ENCODE measurements at regions of chr10 and their contacts with region 1.

Region 1: GRCh38 chr10:47311932-47312662 is 10.2 kb upstream of the GDF2 start:
- DNase-seq: peak; percentile 89
- ATAC-seq: peak; percentile 90
- H3K4me3 Mint-ChIP-seq: peak overlapping the region; percentile 54
- H3K27ac Mint-ChIP-seq: peak overlapping the region; percentile 86
- H3K4me1 Mint-ChIP-seq: peaks cover 18% of the 10 kb centered on the region
- H3K27me3 Mint-ChIP-seq: no peaks in the 10 kb centered on the region

Region 2: DNA sequence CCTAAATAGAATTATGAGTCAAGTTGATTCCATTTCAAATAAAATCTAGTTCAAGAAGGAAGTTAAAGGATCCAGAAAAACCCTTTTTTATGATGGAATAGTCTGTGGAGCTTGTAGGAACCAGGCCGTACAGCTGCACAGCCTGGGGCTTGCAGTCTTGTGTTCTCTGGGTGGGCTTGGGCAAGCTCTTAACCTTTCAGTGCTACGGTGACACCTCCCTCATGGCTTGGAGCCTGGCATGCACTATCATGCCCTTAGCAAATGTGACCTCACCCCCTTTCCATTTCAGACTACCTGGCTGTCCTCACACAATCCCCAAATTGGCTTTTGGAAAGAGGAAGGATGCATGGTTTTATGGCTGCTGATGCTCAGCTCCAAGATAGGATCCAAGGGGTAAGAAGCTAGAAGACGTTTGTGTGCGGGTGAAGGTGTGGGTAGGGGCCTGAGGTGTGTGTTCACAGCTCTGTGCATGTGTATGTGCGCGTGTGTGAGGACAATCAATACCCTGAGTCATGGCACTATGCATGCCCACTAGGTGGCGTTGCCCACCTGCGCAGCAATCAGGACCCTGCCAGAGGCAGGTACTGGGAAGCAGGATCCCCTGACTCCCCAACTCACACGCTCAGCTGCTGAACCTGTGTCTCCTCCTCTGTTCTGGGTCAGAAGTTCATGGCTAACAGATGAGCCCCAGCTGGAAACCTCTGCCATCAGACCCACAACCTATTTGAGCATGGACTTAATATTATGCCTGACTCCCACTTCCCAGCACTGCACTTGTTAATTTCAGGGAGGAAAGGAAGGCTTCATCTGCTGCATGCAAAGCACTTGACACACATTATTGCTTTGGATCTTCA is 287.5 kb before region 1 on chr10:
- CTCF ChIA-PET with region 1: interaction called, 48 read pairs
- POLR2A ChIA-PET with region 1: interaction called, 5 read pairs
- DNase-seq: peak; percentile 76
- ATAC-seq: peak; percentile 86
- H3K4me3 Mint-ChIP-seq: no peak overlapping the region
- H3K27ac Mint-ChIP-seq: no peak overlapping the region
- H3K4me1 Mint-ChIP-seq: no peaks in the 10 kb centered on the region
- H3K27me3 Mint-ChIP-seq: no peaks in the 10 kb centered on the region

Region 3: GRCh38 chr10:47034441-47035051 is 277.6 kb before region 1 on chr10:
- CTCF ChIA-PET with region 1: interaction called, 11 read pairs
- POLR2A ChIA-PET with region 1: no interaction called
- DNase-seq: no peak
- ATAC-seq: no peak
- H3K4me3 Mint-ChIP-seq: no peak overlapping the region
- H3K27ac Mint-ChIP-seq: no peak overlapping the region
- H3K4me1 Mint-ChIP-seq: no peaks in the 10 kb centered on the region
- H3K27me3 Mint-ChIP-seq: no peaks in the 10 kb centered on the region

Region 4: DNA sequence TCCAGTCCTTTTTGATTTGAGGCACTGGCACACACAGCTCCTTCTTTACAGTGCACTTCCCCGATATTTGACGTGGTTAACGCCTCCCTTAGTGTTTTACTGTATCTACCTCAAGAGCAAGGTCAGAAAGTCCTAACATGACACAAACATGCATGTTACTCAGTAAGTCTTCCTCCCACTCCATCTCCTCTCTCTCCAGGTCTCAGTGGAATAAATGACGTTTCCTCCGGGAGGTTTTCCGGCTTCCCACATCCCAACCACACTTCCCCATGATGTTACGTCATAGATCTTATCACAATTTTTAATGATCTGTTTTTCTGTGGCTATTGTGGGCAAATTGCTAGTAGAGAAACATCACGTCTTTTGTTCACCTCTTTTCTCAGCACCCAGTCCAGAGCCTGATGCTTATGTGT is 235.1 kb before region 1 on chr10:
- CTCF ChIA-PET with region 1: interaction called, 10 read pairs
- POLR2A ChIA-PET with region 1: no interaction called
- DNase-seq: no peak
- ATAC-seq: peak; percentile 23
- H3K4me3 Mint-ChIP-seq: no peak overlapping the region
- H3K27ac Mint-ChIP-seq: no peak overlapping the region
- H3K4me1 Mint-ChIP-seq: peaks cover 25% of the 10 kb centered on the region
- H3K27me3 Mint-ChIP-seq: peaks cover 3% of the 10 kb centered on the region

Region 5: DNA sequence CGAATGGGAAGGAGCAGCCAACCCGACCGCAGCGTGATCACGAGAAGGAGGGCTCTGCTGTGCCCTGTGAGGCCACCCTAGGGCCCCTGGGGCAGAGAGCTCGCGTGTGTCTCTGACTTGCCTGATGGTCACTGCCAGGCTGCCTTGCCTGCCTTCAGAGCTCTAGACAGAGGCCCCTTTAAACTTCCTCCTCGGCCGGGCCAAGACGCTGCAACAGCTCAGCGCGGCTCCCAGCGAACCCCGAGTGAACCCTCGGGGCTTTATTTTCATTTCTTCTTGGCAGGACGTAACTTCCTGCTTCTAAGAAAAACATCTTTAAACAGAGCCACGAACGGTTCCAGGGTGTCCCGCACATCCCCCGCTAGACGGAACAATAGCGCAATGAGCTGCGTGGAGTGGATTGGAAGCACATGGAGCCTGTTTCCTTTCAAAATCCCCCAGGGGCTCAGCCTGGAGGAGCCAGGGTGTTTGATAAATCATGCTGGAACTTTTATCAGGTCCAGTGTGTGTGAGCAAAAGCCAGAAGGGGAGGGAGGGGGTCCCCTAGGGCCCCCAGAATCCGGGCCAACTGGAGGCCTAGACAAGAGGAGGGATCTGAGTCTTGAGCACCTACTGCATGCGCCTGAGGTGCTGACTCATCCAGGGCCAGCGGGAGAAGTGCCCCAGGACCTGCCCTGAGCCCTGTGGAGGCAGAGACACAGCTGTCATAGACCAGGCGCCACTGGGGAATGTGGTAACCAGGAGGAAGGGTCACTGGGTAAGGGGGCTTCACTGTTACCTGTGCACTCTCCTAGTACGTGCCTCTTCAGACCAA is 146.2 kb before region 1 on chr10:
- CTCF ChIA-PET with region 1: interaction called, 10 read pairs
- POLR2A ChIA-PET with region 1: interaction called, 8 read pairs
- DNase-seq: peak; percentile 59
- ATAC-seq: peak; percentile 85
- H3K4me3 Mint-ChIP-seq: peak overlapping the region; percentile 75
- H3K27ac Mint-ChIP-seq: peak overlapping the region; percentile 90
- H3K4me1 Mint-ChIP-seq: peaks cover 24% of the 10 kb centered on the region
- H3K27me3 Mint-ChIP-seq: peaks cover 2% of the 10 kb centered on the region

Region 6: DNA sequence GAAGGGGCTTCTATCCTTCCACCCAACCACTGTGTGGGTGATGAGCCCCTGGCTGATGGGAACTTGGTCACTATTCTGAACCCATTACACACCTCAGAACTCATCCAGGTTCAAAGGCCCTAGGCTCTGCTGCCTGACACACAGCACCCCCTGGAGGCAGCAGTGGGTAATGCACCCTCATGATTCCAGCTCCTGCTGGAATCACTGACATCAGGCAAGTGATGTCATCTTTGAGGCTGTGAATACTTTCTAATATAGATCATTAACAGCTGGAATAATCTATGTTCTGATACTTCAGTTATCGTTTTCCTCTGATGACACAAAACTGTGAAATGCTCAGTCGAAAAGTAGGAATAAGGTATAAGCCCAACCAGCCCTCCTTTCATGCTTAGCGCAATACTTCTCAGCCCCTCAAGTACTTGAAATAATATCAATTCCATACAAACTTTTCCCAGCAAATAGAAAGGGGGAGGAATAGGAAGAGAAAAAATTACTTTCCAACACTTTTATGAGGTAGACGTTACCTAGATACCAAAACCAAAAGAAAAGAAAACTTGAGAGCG is 28.6 kb after region 1 on chr10:
- CTCF ChIA-PET with region 1: interaction called, 14 read pairs
- POLR2A ChIA-PET with region 1: no interaction called
- DNase-seq: peak; percentile 76
- ATAC-seq: peak; percentile 49
- H3K4me3 Mint-ChIP-seq: no peak overlapping the region
- H3K27ac Mint-ChIP-seq: no peak overlapping the region
- H3K4me1 Mint-ChIP-seq: no peaks in the 10 kb centered on the region
- H3K27me3 Mint-ChIP-seq: no peaks in the 10 kb centered on the region

Measured in activated CD8-positive, alpha-beta T cell treated with anti-CD3 and anti-CD28 coated beads, Interleukin-2, amount 10 ng/mL, durations not matched to agents 7 days and 5 days (primary cell).